ENCODE measurements at regions of chr16 and their contacts with region 1.

Region 1: GRCh38 chr16:87012954-87013946 is 303.9 kb downstream of the C16orf95 start:
- DNase-seq: no peak

Region 2: DNA sequence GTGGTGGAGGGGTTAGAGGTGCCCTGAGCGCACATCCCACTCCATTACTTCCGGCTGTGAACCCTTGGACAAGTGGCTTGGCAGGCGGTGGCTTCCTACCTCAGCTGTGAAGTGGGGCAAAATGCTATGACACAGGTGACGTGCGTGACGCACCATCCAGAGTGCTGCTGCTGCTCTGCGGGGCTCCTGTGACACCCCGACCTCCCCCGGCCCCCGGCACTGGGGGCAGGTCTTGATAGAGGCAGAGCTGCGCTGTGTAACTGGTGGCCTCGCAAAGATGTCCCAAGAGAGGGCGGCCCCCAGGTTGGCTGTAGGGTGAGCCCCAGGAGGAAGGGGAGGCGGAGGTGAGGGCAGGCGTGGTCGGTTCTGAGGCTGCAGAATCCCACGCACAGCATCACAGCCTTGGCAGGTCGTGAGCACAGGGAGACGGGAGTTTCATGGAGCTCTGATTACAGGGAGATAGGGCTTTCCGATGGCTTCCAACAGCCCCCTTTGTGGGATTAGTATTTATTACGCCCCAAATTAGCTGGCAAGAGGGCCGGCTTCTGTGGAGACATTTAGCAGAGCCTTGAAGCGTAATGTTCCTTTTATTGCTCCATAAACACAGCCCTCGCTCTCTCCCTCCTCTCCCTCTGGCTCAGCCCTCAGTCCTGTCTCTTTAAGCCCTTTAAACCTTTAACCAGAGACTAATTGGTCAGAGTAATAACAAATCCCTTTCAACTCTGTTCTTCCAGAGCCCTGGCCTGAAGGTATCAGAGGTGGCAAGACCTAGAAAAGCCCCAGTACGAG is 24.1 kb before region 1 on chr16:
- intact Hi-C with region 1: loop called in 1 of 2 experiments (anchors 1 kb)
- DNase-seq: peak; percentile 55